Right ventricle myocardium inferior (tissue), 1 donor: ENCODE measurements at regions of chr12 and their contacts with region 1.

Region 1: DNA sequence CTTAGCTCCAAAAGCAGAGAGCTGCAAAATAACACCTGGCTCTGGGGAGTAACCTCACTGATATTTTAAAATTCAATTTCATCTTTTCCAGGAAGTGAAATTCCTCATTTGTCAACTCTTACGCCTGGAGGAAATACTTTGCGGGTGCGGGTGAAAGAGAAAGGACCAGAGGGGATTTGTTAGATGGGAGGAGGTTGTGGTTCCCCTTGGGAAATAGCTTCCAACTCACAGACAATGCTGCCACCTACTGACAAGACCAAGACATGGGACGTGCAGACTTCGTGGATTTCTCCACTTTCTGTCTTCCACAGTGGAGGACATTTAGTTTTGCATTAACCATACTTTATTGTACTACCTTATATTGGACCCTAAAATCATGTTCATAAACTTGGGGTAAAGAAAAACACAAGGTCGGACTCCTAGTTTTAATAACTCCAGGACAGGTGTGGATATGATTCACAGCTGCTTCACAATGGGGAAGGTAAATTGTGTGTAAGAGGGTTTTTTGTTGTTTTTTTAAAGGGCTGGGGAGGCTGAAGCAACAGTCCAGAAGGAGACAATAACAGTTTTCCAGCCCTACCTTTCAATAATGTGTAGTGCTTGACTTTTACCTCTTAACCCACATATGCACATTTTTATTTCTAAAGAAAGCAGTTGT is 10.8 kb downstream of the FBXL14 start:
- DNase-seq: no peak
- ATAC-seq: peak; percentile 85

Region 2: GRCh38 chr12:1117970-1118563 is 465.5 kb before region 1 on chr12:
- intact Hi-C with region 1: loop called (anchors 1 kb)
- DNase-seq: no peak
- ATAC-seq: peak; percentile 63

Region 3: GRCh38 chr12:1204581-1205121 is 378.9 kb before region 1 on chr12:
- intact Hi-C with region 1: loop called (anchors 10 kb)
- DNase-seq: no peak
- ATAC-seq: no peak

Region 4: GRCh38 chr12:1282670-1283335 is 300.7 kb before region 1 on chr12:
- intact Hi-C with region 1: loop called (anchors 10 kb)
- DNase-seq: no peak
- ATAC-seq: peak; percentile 88

Region 5: GRCh38 chr12:1481326-1481725 is 102.2 kb before region 1 on chr12:
- intact Hi-C with region 1: no loop called
- DNase-seq: no peak
- ATAC-seq: no peak